ENCODE measurements at regions of chr3 and their contacts with region 1.

Region 1: GRCh38 chr3:98022978-98023820 is 11.9 kb downstream of the GABRR3 start:
- DNase-seq: peak; percentile 71 to 99
- H3K4me3 ChIP-seq: no peak overlapping the region
- H3K27ac ChIP-seq: no peak overlapping the region
- H3K4me1 ChIP-seq: no peaks in the 10 kb centered on the region
- H3K27me3 ChIP-seq: no peaks in the 10 kb centered on the region
- CTCF ChIP-seq: peak; percentile 74 to 91 (median 83)
- EP300 ChIP-seq: no peak
- POLR2A ChIP-seq: no peak
- RAD21 ChIP-seq: peak; percentile 95 to 96

Region 2: GRCh38 chr3:97863031-97863430 is 160.2 kb before region 1 on chr3:
- CTCF ChIA-PET with region 1: no interaction called
- POLR2A ChIA-PET with region 1: no interaction called
- DNase-seq: no peak
- H3K4me3 ChIP-seq: no peak overlapping the region
- H3K27ac ChIP-seq: no peak overlapping the region
- H3K4me1 ChIP-seq: no peaks in the 10 kb centered on the region
- H3K27me3 ChIP-seq: peaks cover 0 to 1% (median 0%) of the 10 kb centered on the region in 4 experiments; a peak in 1 of 7 replicates
- CTCF ChIP-seq: no peak
- EP300 ChIP-seq: no peak
- POLR2A ChIP-seq: no peak
- RAD21 ChIP-seq: no peak

Region 3: DNA sequence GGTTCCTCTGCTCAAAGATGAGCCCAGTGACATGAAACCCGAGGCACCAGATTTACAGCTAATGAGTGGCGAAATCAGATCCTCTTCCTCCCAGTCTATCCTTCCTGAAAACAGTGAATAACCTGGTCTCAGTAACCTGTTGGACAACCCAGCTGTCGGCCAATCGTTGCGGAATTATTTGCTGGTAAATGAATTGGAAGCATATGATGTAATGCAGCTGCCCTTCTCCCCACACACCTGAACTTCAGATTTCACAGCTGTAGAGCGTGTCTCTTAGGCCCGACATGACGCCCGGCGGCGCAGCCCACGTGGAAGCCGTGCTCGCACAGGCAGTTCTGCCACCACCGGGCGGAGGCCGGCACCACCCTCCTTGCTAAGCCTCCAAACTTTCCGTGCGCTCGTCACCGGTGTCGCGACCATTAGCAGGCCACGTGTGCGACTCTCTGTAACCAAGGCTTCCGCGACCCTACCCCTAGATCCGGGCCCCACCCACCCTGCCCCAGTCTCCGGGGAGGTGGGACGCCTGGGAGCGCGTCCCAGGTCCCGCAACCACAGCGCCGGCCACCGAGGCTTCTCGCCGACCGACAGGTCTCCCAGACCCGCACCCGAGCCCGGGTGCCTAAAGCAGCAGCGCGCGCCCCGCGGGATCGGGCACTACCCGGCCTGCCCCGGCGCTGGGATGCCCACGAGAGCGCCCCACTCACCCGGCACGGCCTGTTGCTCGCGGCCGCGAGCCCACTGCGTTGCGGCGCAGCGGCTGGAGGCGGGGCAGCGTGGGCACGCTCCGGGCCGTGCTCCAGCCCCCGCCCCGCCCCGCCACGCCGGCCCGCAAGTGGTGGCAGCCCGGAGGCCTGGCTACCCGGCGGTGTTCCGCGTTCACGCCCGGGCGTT is 51.3 kb before region 1 on chr3 and contains the start of gene RIOX2:
- CTCF ChIA-PET with region 1: interaction called, 23 read pairs
- POLR2A ChIA-PET with region 1: no interaction called
- DNase-seq: peak in 1 of 2 experiments; percentile 73
- H3K4me3 ChIP-seq: peak within 1 kb of the TSS; percentile 41 to 64 (median 54)
- H3K27ac ChIP-seq: no peak within 1 kb of the TSS
- H3K4me1 ChIP-seq: 0 out of 7 replicates have a peak, but pooled peaks cover 0 to 2% (median 0%) of the 10 kb centered on the region in 4 experiments
- H3K27me3 ChIP-seq: no peaks in the 10 kb centered on the region
- CTCF ChIP-seq: no peak
- EP300 ChIP-seq: no peak
- POLR2A ChIP-seq: no peak; a peak in 1 of 3 replicates
- RAD21 ChIP-seq: no peak
- total RNA-seq, gene RIOX2: 15.5 and 16.4 TPM in 2 replicates